Astrocyte of the cerebellum (primary cell): ENCODE measurements at regions of chr1 and their contacts with region 1.

Region 1: GRCh38 chr1:67500413-67500959 is 70.3 kb upstream of the SERBP1 start:
- DNase-seq: peak; percentile 66
- H3K4me3 ChIP-seq: no peak overlapping the region
- CTCF ChIP-seq: peak; percentile 98

Region 2: DNA sequence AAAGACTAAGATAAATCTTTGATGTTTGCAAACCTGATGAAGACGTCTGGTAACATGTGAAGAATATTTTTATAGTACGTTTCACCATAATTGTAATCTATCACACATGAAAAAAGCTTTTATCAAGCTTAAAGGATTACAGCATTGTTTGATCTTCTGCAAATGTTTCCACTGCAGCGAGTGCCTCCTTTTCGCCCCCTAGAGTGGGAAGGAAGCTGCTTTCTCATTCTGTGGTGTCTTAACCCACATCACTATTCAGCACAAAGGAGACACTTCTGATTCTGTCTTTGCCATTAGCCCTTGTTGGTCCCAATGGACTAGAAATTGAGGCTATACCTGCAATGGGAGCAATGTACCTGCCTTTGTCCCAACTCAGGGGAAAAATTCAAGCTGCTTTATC is 238.8 kb before region 1 on chr1:
- in situ Hi-C with region 1: no loop called
- DNase-seq: no peak
- H3K4me3 ChIP-seq: no peak overlapping the region
- CTCF ChIP-seq: peak; percentile 30

Region 3: GRCh38 chr1:67347688-67348472 is 152.6 kb before region 1 on chr1:
- in situ Hi-C with region 1: loop called (anchors 5 kb)
- DNase-seq: peak; percentile 56
- H3K4me3 ChIP-seq: peak overlapping the region; percentile 10
- CTCF ChIP-seq: peak; percentile 86